ENCODE measurements at regions of chr16 and their contacts with region 1.

Region 1: DNA sequence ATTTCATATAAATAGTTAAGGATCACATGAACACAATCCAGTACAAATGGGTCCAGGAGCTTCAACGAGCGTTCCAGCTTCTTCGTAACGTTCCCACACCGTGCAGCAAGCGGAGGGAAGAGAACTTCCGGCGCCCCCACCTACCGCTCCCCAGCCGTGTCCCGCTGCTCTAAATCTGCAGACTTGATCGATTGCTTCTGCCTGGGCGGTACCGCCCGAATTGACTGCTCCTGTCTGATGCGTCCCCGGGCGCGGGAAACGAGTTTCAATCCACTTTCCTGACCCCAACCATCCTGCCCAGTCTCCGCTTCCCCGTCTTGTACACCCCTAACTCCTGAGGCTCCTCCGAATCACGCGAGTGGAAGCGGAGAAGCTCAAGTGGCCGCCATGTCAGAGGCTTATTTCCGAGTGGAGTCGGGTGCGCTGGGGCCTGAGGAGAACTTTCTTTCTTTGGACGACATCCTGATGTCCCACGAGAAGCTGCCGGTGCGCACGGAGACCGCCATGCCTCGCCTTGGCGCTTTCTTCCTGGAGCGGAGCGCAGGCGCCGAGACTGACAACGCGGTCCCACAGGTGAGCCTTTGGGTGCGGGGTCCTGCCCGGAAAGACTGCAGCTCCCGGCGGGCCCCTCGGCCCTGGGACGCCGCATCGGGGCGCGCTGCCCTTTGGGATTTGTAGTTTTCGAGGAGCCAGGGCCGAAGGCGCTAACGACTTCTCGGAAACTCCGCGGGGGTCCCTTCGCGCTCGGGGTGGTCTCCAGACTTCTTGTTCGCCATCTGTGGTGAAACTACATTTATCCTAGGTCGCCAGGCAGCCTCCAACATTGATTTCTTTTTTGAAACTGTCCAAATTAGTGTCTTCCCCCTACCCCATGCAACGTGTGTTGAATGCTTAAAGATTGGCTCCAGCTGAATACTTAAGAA is at the start of gene GINS3:
- DNase-seq: peak; percentile 83
- H3K4me3 Mint-ChIP-seq: peak within 1 kb of the TSS; percentile 99
- H3K27ac Mint-ChIP-seq: peak within 1 kb of the TSS; percentile 96
- H3K4me1 Mint-ChIP-seq: peaks cover 13% of the 10 kb centered on the region
- H3K27me3 Mint-ChIP-seq: peaks cover 22% of the 10 kb centered on the region
- total RNA-seq, gene GINS3: 21.0 and 22.2 TPM in 2 replicates

Region 2: DNA sequence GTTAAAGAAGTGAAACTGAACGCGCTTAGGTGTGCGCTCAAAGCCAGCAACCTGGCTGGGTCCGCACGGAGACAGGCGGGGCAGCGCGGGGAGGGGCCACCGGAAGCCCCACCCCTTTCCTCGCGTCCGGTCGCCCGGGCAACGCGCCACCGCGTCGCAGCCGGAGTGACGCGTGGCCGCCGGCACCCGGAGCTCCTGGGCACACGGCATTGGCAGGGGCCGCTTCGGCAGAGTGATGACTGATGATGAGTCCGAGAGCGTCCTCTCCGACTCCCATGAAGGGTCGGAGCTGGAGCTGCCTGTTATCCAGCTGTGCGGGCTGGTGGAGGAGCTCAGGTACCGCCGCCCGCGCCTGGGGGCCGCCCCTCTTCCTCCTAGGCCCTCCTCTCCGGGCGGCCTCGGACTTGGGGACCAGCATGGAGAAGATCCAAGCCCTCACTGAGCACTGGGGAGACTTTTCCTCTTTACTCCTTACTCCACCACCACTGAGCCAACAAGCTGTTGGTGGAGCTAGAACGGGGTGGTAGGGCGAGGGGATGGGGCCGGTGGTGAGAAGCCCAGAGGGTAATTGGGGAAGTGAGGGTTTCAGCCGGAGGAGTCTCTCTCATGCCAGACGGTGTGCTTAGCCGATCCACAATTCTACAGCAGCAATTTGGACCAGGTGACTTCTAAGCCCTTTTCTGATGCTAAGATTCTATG is 142.5 kb before region 1 on chr16:
- intact Hi-C with region 1: loop called (anchors 5 kb)
- DNase-seq: peak; percentile 83
- H3K4me3 Mint-ChIP-seq: peak overlapping the region; percentile 86
- H3K27ac Mint-ChIP-seq: peak overlapping the region; percentile 76
- H3K4me1 Mint-ChIP-seq: peaks cover 7% of the 10 kb centered on the region
- H3K27me3 Mint-ChIP-seq: peaks cover 4% of the 10 kb centered on the region

Region 3: DNA sequence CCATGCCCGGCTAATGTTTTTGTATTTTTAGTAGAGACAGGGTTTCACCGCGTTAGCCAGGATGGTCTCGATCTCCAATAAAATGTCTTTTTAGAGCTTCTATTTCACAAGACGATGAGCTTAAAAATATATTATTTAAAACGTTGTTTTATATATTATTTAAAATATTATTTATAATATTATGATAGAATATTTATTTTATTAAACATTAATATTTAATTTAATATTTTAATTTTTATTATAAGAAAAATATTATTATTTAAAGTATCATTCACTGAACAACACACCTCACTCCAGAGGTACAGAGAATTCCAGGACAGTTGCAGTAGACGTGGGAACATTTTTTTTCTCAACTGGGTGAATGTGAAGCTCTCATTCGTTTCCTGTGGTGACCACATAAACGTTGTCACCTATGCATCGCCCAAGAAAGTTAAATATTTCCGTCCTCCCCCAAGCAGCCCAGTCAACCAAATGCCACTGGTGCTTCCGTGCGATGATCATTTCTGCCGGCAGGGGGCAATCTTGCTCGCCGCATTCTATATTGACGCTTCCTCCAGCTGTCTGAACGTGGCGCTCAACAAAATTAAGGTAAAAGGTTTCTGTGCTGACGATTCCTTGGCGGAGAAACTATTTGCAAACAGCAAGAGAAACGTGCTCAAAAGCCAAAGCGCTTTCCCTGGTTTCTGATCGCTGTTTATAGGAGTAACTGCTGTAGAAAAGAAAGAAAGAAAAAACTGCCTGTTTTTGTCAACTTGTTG is 56.0 kb before region 1 on chr16:
- intact Hi-C with region 1: loop called (anchors 5 kb)
- DNase-seq: peak; percentile 78
- H3K4me3 Mint-ChIP-seq: no peak overlapping the region
- H3K27ac Mint-ChIP-seq: no peak overlapping the region
- H3K4me1 Mint-ChIP-seq: peaks cover 7% of the 10 kb centered on the region
- H3K27me3 Mint-ChIP-seq: no peaks in the 10 kb centered on the region

Region 4: GRCh38 chr16:58409316-58409973 is 17.0 kb after region 1 on chr16:
- intact Hi-C with region 1: no loop called
- DNase-seq: no peak
- H3K4me3 Mint-ChIP-seq: no peak overlapping the region
- H3K27ac Mint-ChIP-seq: no peak overlapping the region
- H3K4me1 Mint-ChIP-seq: no peaks in the 10 kb centered on the region
- H3K27me3 Mint-ChIP-seq: peaks cover 2% of the 10 kb centered on the region

Region 5: DNA sequence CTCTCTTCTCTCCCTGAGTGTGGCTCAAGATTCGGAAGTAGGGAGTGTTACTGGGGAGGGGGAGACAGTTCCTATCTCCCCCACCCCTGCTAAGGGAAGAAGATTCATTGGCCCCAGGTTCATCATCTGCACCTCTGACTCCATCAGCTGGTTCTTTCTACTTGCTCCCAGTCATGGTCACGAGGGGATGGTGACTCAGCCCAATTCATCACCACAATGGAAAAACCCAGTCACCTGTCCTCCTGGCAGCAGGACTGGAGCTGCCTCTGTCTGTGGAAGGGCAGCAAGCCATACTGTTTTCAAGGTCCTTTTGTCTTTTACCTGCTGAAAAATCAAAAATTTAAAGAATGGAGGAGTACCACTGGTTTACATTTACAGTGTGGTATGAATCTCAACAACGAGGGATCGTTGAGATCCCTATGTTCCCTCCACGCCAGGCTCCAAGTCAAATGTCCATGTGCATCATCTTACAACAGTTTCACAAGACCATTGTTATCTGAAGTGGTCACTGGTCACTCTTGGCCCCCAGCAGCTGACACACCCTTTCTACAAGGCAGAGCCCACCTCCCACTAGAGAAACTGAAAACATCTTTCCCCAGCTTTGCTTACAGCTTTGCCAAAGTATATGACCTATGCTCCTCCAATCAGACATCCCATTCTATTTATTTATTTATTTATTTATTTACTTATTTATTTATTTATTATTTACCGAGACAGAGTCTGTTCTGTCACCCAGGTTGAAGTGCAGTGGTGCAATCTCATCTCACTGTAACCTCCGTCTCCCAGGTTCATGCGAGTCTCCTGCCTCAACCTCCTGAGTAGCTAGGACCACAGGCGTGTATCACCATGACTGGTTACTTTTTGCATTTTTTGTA is 67.1 kb after region 1 on chr16:
- intact Hi-C with region 1: loop called (anchors 5 kb)
- DNase-seq: peak; percentile 12
- H3K4me3 Mint-ChIP-seq: no peak overlapping the region
- H3K27ac Mint-ChIP-seq: no peak overlapping the region
- H3K4me1 Mint-ChIP-seq: peaks cover 12% of the 10 kb centered on the region
- H3K27me3 Mint-ChIP-seq: peaks cover 21% of the 10 kb centered on the region

Region 6: DNA sequence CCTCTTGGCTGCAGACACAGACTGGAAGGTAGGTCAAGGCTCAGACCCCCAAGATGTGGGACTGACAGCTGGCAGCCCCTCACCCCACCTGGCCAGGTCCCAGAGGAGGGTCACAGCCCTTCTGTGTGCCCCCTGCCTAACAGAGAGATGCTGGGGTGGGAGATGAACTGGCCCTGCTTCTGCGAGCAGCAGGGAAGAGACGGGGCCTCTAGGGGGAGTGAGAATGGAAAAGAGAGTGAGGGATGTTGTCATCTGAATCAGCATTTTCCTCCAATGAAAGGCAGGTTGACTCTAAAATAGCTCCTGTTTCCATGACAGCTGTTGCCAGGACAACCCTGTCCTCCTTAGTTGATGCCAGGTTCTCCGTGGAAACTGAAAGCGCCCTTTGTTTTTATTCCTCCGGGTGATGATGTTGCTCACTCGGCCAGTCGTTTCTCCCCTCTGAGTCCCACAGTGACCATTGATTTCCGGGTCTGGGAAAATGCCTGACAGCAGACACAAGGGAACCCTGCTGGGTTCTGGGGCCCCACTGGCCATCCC is 102.6 kb after region 1 on chr16:
- intact Hi-C with region 1: loop called (anchors 5 kb)
- DNase-seq: peak; percentile 71
- H3K4me3 Mint-ChIP-seq: no peak overlapping the region
- H3K27ac Mint-ChIP-seq: peak overlapping the region; percentile 63
- H3K4me1 Mint-ChIP-seq: peaks cover 9% of the 10 kb centered on the region
- H3K27me3 Mint-ChIP-seq: peaks cover 2% of the 10 kb centered on the region

Region 7: GRCh38 chr16:58684354-58685083 is 292.0 kb after region 1 on chr16 and contains the start of gene SLC38A7:
- intact Hi-C with region 1: loop called (anchors 1 kb)
- DNase-seq: peak; percentile 65
- H3K4me3 Mint-ChIP-seq: peak within 1 kb of the TSS; percentile 87
- H3K27ac Mint-ChIP-seq: peak within 1 kb of the TSS; percentile 62
- H3K4me1 Mint-ChIP-seq: peaks cover 9% of the 10 kb centered on the region
- H3K27me3 Mint-ChIP-seq: no peaks in the 10 kb centered on the region
- total RNA-seq, gene SLC38A7: 8.8 and 9.8 TPM in 2 replicates